ENCODE measurements at regions of chr9 and their contacts with region 1.

Region 1: DNA sequence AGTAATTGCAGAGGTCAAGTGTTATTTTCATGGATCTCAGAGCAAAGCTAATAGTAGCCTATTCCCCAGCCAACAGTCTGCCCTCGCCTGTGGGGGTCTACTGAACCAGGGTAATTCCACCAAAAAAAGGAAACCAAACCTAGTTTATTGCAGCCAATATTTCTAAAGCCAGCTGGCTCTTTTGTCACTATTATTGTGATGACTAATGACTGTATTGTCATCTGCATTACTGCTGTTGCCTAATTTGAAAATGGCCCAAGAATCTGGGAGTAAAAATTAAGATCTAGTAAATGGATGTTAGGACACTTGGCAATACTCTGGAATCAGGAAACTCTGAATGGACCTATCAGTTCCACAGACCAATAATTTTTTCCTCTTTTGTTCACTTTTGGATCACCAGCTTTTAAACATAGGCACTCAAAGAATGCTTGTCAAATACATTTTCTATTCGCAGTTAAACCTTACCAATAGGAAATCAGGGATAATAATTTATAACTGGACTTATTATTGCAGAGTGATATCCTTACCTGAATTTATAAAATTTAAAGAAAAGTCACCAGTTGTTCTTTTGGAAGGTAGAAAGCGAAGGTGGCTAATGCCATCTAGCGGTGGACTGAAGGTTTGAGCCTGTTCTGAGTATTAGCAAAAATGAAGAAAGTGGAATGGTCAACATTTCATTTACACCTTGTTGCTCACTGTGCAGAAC is 69.2 kb downstream of the SYK start:
- DNase-seq: peak in 6 of 7 donors; percentile 35 to 65 (median 48)
- H3K4me3 ChIP-seq: no peak overlapping the region
- H3K27ac ChIP-seq: no peak overlapping the region
- H3K4me1 ChIP-seq: no peaks in the 10 kb centered on the region
- H3K27me3 ChIP-seq: peaks cover 7% of the 10 kb centered on the region
- CTCF ChIP-seq: peak; percentile 69 to 88 (median 75)
- POLR2A ChIP-seq: no peak

Region 2: GRCh38 chr9:89576404-89576839 is 1294.4 kb before region 1 on chr9:
- intact Hi-C with region 1: loop called in 1 of 2 experiments (anchors 5 kb)
- DNase-seq: peak in 1 of 7 donors; percentile 21
- H3K4me3 ChIP-seq: no peak overlapping the region
- H3K27ac ChIP-seq: no peak overlapping the region
- H3K4me1 ChIP-seq: no peaks in the 10 kb centered on the region
- H3K27me3 ChIP-seq: peaks cover 7% of the 10 kb centered on the region
- CTCF ChIP-seq: peak; percentile 61 to 83 (median 76)
- POLR2A ChIP-seq: no peak

Region 3: DNA sequence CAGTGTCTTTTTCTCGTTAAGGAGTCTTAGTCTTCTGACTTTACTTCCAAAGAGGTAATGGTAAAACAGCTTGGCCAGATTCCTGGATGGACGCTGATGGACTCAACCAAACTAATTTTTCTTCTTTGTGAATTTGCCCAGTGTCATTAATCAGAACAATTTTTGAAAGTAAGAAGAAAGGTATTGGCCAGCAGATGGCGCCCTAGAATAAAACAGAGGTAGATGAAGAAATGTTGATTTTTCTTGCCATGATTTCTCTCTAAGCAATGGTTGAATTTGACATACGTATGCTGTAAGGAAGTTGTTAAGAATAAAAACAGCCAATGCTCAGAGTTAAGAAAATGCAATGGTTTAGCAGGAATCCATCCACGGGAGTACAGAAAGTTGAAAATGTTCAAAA is 728.2 kb before region 1 on chr9:
- intact Hi-C with region 1: loop called (anchors 5 to 10 kb)
- DNase-seq: peak in 6 of 7 donors; percentile 39 to 74 (median 58)
- H3K4me3 ChIP-seq: no peak overlapping the region
- H3K27ac ChIP-seq: no peak overlapping the region
- H3K4me1 ChIP-seq: no peaks in the 10 kb centered on the region
- H3K27me3 ChIP-seq: no peaks in the 10 kb centered on the region
- CTCF ChIP-seq: peak; percentile 46 to 61 (median 53)
- POLR2A ChIP-seq: no peak